ENCODE measurements at regions of chr12 and their contacts with region 1.

Region 1: DNA sequence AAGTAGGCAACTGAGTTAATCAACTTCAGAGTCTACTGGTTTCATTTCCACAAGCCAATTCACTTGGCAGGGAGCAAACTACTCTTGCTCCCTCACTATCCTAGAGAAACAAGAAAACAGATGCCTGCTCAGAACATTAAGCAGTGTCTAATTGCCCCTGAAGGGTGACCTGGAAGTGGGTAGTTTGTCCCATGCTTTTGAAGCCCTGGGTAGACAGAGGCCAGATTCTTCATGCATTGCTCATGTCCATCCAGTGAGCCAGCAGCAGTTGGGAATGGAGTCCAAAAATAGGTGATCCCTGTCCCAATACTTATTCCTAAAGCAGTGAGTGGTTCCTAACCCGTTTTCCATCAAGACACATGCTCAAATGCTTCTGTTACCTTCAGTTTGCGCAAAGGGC is 48.8 kb downstream of the BICDL1 start:
- DNase-seq: no peak
- ATAC-seq: no peak
- H3K4me3 ChIP-seq: no peak overlapping the region
- H3K4me3 Mint-ChIP-seq: no peak overlapping the region
- H3K27ac ChIP-seq: no peak overlapping the region
- H3K27ac Mint-ChIP-seq: no peak overlapping the region
- H3K4me1 ChIP-seq: peaks cover 2 to 15% of the 10 kb centered on the region in 2 experiments
- H3K4me1 Mint-ChIP-seq: peaks cover 28 to 39% (median 32%) of the 10 kb centered on the region in 3 donors
- H3K27me3 ChIP-seq: no peaks in the 10 kb centered on the region
- H3K27me3 Mint-ChIP-seq: no peaks in the 10 kb centered on the region

Region 2: DNA sequence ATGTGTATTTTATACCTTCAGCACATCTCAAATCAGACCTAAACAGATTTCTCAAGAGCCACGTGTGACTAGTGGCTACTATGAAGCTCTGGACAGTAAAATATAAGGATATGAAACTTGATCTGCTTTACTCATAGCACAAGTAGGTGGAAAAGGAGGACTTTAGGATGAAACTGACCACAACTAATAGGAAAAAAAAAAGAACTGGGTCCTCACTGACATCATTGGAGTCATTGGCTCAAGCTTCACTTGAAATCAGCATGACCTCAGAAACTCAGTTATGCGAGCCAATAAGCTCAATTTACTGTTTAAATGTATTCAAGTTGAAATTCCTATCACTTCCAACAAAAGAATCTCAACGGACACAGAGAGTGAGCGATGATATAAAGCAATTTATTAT is 126.7 kb before region 1 on chr12:
- CTCF ChIA-PET with region 1: no interaction called
- POLR2A ChIA-PET with region 1: interaction called in 1 of 2 experiments, 11 read pairs
- DNase-seq: no peak
- ATAC-seq: no peak
- H3K4me3 ChIP-seq: no peak overlapping the region
- H3K4me3 Mint-ChIP-seq: no peak overlapping the region
- H3K27ac ChIP-seq: no peak overlapping the region
- H3K27ac Mint-ChIP-seq: no peak overlapping the region
- H3K4me1 ChIP-seq: no peaks in the 10 kb centered on the region
- H3K4me1 Mint-ChIP-seq: no peaks in the 10 kb centered on the region
- H3K27me3 ChIP-seq: peaks cover 0 to 2% of the 10 kb centered on the region in 2 experiments
- H3K27me3 Mint-ChIP-seq: peaks cover 1 to 3% of the 10 kb centered on the region in 2 donors

Region 3: DNA sequence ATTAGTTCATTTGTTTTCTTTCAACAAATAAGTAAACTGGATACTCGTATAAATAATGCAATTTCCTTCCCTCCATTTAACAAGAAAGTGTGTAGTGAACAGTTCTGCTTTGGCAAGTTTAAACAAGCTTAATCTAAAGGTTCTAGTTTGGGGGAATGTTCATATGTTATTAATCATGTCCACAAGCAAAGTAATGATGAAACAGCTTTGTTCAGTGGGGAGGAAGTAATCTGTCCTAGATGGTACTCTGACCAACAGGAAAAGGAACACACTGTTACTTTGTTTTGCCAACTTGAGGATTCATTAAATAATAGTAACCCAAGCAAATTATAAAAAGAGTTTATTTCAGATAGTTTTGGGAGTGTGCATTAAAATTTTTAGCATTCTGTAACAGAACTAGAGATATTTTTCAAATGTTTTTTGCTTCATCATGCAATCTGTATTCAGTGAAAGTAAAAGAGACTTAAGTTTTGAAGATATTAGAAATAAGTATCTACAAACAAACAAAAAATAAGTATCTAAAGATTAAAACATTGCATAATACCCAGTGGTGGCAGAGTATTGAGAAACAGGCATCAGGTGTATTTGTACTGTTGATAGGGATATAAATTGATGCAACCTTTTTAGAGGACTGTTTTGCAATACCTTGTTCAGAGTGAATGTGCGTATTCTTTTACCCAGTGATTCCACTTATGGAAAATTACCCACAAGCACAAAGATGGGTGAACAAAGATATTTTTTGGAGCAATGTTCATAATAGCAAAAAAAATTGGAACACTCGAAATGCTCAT is 17.6 kb after region 1 on chr12:
- CTCF ChIA-PET with region 1: no interaction called
- POLR2A ChIA-PET with region 1: no interaction called
- DNase-seq: no peak
- ATAC-seq: no peak
- H3K4me3 ChIP-seq: no peak overlapping the region
- H3K4me3 Mint-ChIP-seq: no peak overlapping the region
- H3K27ac ChIP-seq: no peak overlapping the region
- H3K27ac Mint-ChIP-seq: no peak overlapping the region
- H3K4me1 ChIP-seq: no peaks in the 10 kb centered on the region
- H3K4me1 Mint-ChIP-seq: peaks cover 12 to 21% (median 19%) of the 10 kb centered on the region in 3 donors
- H3K27me3 ChIP-seq: no peaks in the 10 kb centered on the region
- H3K27me3 Mint-ChIP-seq: no peaks in the 10 kb centered on the region